Activated B cell treated with CpG ODN at 0.5 μM for 24 hours (primary cell): ENCODE measurements at regions of chr1 and their contacts with region 1.

Region 1: GRCh38 chr1:15937706-15938168 is 38.2 kb downstream of the ZBTB17 start:
- DNase-seq: no peak
- ATAC-seq: no peak
- H3K4me3 Mint-ChIP-seq: no peak overlapping the region
- H3K27ac Mint-ChIP-seq: peak overlapping the region; percentile 86
- H3K4me1 Mint-ChIP-seq: peaks cover 7% of the 10 kb centered on the region
- H3K27me3 Mint-ChIP-seq: no peaks in the 10 kb centered on the region
- CTCF ChIP-seq: no peak

Region 2: GRCh38 chr1:15640667-15641066 is 297.1 kb before region 1 on chr1:
- CTCF ChIA-PET with region 1: no interaction called
- POLR2A ChIA-PET with region 1: no interaction called
- intact Hi-C with region 1: no loop called
- DNase-seq: no peak
- ATAC-seq: no peak
- H3K4me3 Mint-ChIP-seq: no peak overlapping the region
- H3K27ac Mint-ChIP-seq: peak overlapping the region; percentile 50
- H3K4me1 Mint-ChIP-seq: no peaks in the 10 kb centered on the region
- H3K27me3 Mint-ChIP-seq: no peaks in the 10 kb centered on the region
- CTCF ChIP-seq: no peak

Region 3: DNA sequence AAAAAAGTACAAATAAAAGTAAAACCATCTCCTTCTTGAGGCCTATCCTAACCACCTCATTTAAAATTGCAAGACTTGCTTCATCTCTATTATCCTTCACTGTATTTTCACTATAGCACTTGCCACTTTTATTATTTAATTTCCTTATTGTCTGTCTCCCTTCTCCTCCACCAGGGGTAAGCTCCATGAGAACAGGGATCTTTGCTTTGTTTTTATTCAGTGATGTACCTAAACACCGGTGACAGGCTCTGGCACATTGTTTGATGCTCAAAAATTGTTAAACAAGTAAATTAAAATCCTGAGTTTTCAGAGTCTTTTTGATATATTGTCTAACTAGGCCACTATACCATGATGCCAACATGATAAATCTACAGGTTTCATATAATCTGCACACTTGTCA is 107.5 kb before region 1 on chr1:
- CTCF ChIA-PET with region 1: no interaction called
- POLR2A ChIA-PET with region 1: no interaction called
- intact Hi-C with region 1: no loop called
- DNase-seq: no peak
- ATAC-seq: no peak
- H3K4me3 Mint-ChIP-seq: peak overlapping the region; percentile 79
- H3K27ac Mint-ChIP-seq: peak overlapping the region; percentile 85
- H3K4me1 Mint-ChIP-seq: peaks cover 63% of the 10 kb centered on the region
- H3K27me3 Mint-ChIP-seq: no peaks in the 10 kb centered on the region
- CTCF ChIP-seq: no peak

Region 4: DNA sequence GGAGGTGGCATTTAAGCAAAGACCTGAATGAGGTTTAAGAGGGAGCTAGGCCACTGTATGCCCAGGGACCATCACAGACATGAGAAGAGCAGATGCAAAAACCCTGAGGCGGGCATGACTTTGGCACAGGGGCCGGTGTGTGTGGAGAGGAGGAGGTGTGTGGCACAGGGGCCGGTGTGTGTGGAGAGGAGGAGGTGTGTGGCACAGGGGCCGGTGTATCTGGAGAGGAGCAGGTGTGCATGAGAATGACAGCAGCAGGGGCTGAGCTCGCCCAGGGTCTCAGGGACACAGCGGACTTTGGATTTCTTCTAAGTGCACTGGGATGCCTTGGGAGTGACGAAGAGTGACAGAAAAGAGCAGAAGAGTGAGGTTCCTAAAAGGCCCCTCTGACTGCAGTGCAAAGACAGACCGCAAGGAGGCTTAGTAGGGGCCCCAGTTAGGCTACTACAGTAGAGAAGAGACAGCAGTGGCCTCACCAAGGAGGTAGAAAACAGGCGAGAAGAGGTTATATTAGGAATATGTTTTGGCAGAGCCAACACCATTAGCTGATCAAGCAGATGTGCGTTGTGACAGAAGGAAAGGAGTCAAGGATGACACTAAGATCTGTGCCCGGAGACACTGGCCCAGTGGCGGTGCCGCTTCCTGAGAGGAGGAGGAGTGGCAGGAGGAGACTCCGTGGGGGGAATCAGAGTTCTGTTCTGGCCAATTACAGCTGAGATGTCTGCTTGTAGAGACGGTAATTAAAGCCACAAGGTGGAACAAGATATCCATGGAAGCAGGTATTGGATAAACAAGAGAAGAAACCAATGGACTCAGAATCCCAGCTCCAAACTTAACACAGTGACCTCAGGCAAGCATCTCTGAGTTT is 19.7 kb after region 1 on chr1:
- CTCF ChIA-PET with region 1: no interaction called
- POLR2A ChIA-PET with region 1: interaction called, 10 read pairs
- intact Hi-C with region 1: no loop called
- DNase-seq: no peak
- ATAC-seq: no peak
- H3K4me3 Mint-ChIP-seq: no peak overlapping the region
- H3K27ac Mint-ChIP-seq: peak overlapping the region; percentile 69
- H3K4me1 Mint-ChIP-seq: peaks cover 71% of the 10 kb centered on the region
- H3K27me3 Mint-ChIP-seq: no peaks in the 10 kb centered on the region
- CTCF ChIP-seq: no peak